Ascending aorta (tissue), 2 donors: ENCODE measurements at regions of chr10 and their contacts with region 1.

Region 1: DNA sequence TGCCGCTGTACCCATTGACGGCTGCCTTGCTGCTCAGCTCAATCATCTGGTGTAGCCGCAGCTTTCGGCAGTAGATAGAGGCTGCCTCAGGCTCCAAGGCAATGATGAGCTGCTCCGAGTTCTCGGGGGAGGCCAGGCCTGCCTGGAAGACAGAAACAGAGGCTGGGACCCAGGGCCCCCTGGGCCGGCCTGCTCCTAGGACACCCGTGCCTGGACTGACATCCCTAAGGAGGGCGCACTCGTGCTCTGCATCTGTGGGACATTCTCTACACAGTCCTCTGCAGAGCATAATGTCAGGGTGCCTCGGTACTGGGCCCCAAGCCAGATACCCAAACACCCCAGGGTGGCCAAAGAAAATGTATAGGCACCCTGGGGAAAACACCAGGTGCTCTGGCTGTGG is 58.5 kb downstream of the HSPA12A start:
- DNase-seq: no peak
- H3K4me3 ChIP-seq: no peak overlapping the region
- H3K27ac ChIP-seq: no peak overlapping the region
- H3K4me1 ChIP-seq: peaks cover 6 to 8% of the 10 kb centered on the region in 2 donors
- H3K27me3 ChIP-seq: no peaks in the 10 kb centered on the region
- CTCF ChIP-seq: no peak

Region 2: GRCh38 chr10:116765547-116766162 is 81.8 kb after region 1 on chr10:
- intact Hi-C with region 1: loop called (anchors 5 kb)
- DNase-seq: no peak
- H3K4me3 ChIP-seq: no peak overlapping the region
- H3K27ac ChIP-seq: no peak overlapping the region
- H3K4me1 ChIP-seq: no peaks in the 10 kb centered on the region
- H3K27me3 ChIP-seq: no peaks in the 10 kb centered on the region
- CTCF ChIP-seq: peak in 1 of 3 experiments; percentile 30